CD4-positive, alpha-beta memory T cell (primary cell): ENCODE measurements at regions of chr1 and their contacts with region 1.

Region 1: DNA sequence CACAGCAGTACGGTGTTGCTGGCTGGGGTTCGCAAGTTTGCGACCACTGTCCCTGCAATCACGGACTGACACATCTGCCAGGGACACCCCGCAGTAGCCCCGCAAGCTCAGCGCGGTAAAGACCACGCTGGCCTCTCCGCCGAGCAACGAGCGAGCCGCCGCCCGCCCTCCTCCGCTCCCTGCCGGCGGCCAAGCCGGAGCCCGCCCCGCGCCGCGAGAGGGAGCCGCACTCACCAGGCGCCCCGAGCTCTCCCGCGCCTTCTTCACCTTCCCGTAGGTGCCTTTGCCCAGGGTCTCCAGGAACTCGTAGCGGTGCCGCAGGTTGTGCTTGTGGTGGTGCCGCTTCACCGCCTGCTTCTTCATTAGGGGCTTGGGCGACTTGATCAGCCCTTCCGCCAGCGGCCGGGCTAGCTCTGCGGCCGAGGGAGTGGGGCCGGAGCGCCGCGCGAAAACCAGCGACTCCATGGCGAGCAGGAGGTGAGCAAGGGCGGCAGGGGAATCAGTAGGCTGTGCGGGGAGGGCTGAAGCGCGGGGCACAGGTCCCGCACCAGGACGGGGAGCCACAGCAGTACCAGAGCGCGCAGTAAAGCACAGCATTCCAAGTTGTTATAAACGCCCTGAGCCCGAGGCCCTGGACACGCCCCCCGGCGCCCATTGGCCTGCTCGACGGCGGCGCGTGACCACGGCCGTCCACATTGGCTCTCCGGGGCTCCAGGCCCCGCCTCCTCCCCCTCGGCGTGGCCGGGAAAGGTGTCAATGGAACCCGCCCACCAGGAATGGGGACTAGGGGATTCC is at the start of gene NUAK2:
- DNase-seq: peak; percentile 80 to 83 (median 81)
- H3K4me3 ChIP-seq: peak within 1 kb of the TSS; percentile 79 to 99
- H3K4me3 Mint-ChIP-seq: peak within 1 kb of the TSS; percentile 95 to 100 (median 98)
- H3K27ac ChIP-seq: peak within 1 kb of the TSS; percentile 74
- H3K27ac Mint-ChIP-seq: peak within 1 kb of the TSS; percentile 83 to 97 (median 90)
- H3K4me1 ChIP-seq: peaks cover 56% of the 10 kb centered on the region
- H3K4me1 Mint-ChIP-seq: peaks cover 49 to 80% (median 68%) of the 10 kb centered on the region in 4 donors
- H3K27me3 ChIP-seq: no peaks in the 10 kb centered on the region
- H3K27me3 Mint-ChIP-seq: no peaks in the 10 kb centered on the region
- total RNA-seq, gene NUAK2: 32.5 to 32.8 TPM

Region 2: GRCh38 chr1:205227584-205228006 is 93.8 kb before region 1 on chr1 and contains the start of gene TMCC2:
- CTCF ChIA-PET with region 1: interaction called, 5 read pairs
- POLR2A ChIA-PET with region 1: interaction called, 6 read pairs
- intact Hi-C with region 1: loop called (anchors 5 kb)
- DNase-seq: peak; percentile 67 to 79 (median 70)
- H3K4me3 ChIP-seq: peak within 1 kb of the TSS; percentile 54 to 57
- H3K4me3 Mint-ChIP-seq: peak within 1 kb of the TSS; percentile 88 to 99 (median 94)
- H3K27ac ChIP-seq: no peak within 1 kb of the TSS
- H3K27ac Mint-ChIP-seq: peak within 1 kb of the TSS; percentile 53 to 97 (median 85)
- H3K4me1 ChIP-seq: peaks cover 25% of the 10 kb centered on the region
- H3K4me1 Mint-ChIP-seq: peaks cover 14 to 33% (median 23%) of the 10 kb centered on the region in 4 donors
- H3K27me3 ChIP-seq: peaks cover 5% of the 10 kb centered on the region
- H3K27me3 Mint-ChIP-seq: peaks cover 8 to 18% of the 10 kb centered on the region in 2 donors
- total RNA-seq, gene TMCC2: 0.90 to 1.2 TPM

Region 3: GRCh38 chr1:205294175-205294913 is 27.0 kb before region 1 on chr1:
- CTCF ChIA-PET with region 1: interaction called, 1,429 read pairs
- POLR2A ChIA-PET with region 1: interaction called, 1,030 read pairs
- intact Hi-C with region 1: loop called (anchors 2 kb)
- DNase-seq: no peak
- H3K4me3 ChIP-seq: no peak overlapping the region
- H3K4me3 Mint-ChIP-seq: no peak overlapping the region
- H3K27ac ChIP-seq: no peak overlapping the region
- H3K27ac Mint-ChIP-seq: peak overlapping the region in 2 of 7 donors; percentile 68 to 79
- H3K4me1 ChIP-seq: peaks cover 72% of the 10 kb centered on the region
- H3K4me1 Mint-ChIP-seq: peaks cover 40 to 88% (median 62%) of the 10 kb centered on the region in 4 donors
- H3K27me3 ChIP-seq: no peaks in the 10 kb centered on the region
- H3K27me3 Mint-ChIP-seq: no peaks in the 10 kb centered on the region

Region 4: GRCh38 chr1:205300886-205301821 is 20.2 kb before region 1 on chr1:
- CTCF ChIA-PET with region 1: interaction called, 49 read pairs
- POLR2A ChIA-PET with region 1: interaction called, 67 read pairs
- intact Hi-C with region 1: loop called (anchors 2 kb)
- DNase-seq: no peak
- H3K4me3 ChIP-seq: no peak overlapping the region
- H3K4me3 Mint-ChIP-seq: no peak overlapping the region
- H3K27ac ChIP-seq: no peak overlapping the region
- H3K27ac Mint-ChIP-seq: peak overlapping the region in 3 of 7 donors; percentile 9 to 35 (median 34)
- H3K4me1 ChIP-seq: peaks cover 29% of the 10 kb centered on the region
- H3K4me1 Mint-ChIP-seq: peaks cover 31 to 61% (median 44%) of the 10 kb centered on the region in 4 donors
- H3K27me3 ChIP-seq: no peaks in the 10 kb centered on the region
- H3K27me3 Mint-ChIP-seq: no peaks in the 10 kb centered on the region

Region 5: DNA sequence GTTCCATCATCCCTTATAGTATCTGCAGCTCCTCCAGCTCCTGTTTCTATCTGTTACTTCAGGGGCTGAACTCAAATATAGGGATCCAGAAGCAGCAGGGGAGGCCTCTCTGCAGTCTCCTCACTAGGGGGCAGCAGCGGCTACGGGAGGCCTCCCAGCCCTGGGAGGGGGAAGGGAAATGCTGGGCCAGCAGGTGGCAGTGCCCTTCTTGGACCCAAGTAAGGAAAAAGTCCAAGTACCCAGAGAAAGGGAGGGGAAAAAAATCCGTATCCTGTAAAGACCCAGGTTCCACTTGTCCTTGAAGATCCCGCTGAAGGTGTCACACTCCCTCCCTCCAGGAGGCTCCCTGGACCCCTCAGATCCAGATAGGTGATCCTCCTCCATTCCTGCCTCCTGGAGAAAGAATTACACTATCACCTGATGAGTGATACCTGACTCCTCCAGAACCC is 14.3 kb after region 1 on chr1:
- CTCF ChIA-PET with region 1: interaction called, 69 read pairs
- POLR2A ChIA-PET with region 1: interaction called, 4 read pairs
- intact Hi-C with region 1: no loop called
- DNase-seq: peak; percentile 68 to 72 (median 70)
- H3K4me3 ChIP-seq: no peak overlapping the region
- H3K4me3 Mint-ChIP-seq: no peak overlapping the region
- H3K27ac ChIP-seq: no peak overlapping the region
- H3K27ac Mint-ChIP-seq: no peak overlapping the region
- H3K4me1 ChIP-seq: no peaks in the 10 kb centered on the region
- H3K4me1 Mint-ChIP-seq: peaks cover 0 to 2% (median 0%) of the 10 kb centered on the region in 4 donors
- H3K27me3 ChIP-seq: no peaks in the 10 kb centered on the region
- H3K27me3 Mint-ChIP-seq: peaks cover 0 to 2% of the 10 kb centered on the region in 2 donors

Region 6: GRCh38 chr1:205410581-205411298 is 89.4 kb after region 1 on chr1:
- CTCF ChIA-PET with region 1: no interaction called
- POLR2A ChIA-PET with region 1: no interaction called
- intact Hi-C with region 1: no loop called
- DNase-seq: no peak
- H3K4me3 ChIP-seq: no peak overlapping the region
- H3K4me3 Mint-ChIP-seq: no peak overlapping the region
- H3K27ac ChIP-seq: no peak overlapping the region
- H3K27ac Mint-ChIP-seq: peak overlapping the region in 1 of 7 donors; percentile 68
- H3K4me1 ChIP-seq: peaks cover 15% of the 10 kb centered on the region
- H3K4me1 Mint-ChIP-seq: peaks cover 12 to 17% (median 14%) of the 10 kb centered on the region in 4 donors
- H3K27me3 ChIP-seq: no peaks in the 10 kb centered on the region
- H3K27me3 Mint-ChIP-seq: peaks cover 0 to 1% of the 10 kb centered on the region in 2 donors